Pancreas (tissue), 10 donors: ENCODE measurements at regions of chr6 and their contacts with region 1.

Region 1: DNA sequence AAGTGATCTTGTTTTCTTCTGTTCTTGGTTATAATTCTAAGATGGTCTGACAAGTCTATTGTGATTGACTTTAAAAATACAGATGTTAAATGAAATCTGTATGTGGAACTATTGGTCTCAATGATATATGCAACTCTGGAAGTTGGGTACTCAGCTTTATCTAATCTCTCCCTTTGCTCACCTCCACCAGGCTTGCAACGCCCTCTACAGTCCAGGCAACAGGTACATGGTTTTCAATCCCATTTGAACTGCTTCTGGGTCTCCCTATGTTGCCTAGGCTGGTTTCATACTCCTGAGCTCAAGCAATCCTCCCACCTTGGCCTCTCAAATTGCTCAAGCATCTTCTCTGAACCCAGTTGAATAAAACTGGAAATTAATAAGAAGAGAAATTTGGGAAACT is 25.6 kb upstream of the HLA-DQB1 start:
- DNase-seq: peak in 1 of 6 donors; percentile 17
- ATAC-seq: peak in 1 of 4 donors; percentile 82
- H3K4me3 ChIP-seq: no peak overlapping the region
- H3K27ac ChIP-seq: no peak overlapping the region
- H3K4me1 ChIP-seq: no peaks in the 10 kb centered on the region
- H3K27me3 ChIP-seq: no peaks in the 10 kb centered on the region
- CTCF ChIP-seq: no peak

Region 2: DNA sequence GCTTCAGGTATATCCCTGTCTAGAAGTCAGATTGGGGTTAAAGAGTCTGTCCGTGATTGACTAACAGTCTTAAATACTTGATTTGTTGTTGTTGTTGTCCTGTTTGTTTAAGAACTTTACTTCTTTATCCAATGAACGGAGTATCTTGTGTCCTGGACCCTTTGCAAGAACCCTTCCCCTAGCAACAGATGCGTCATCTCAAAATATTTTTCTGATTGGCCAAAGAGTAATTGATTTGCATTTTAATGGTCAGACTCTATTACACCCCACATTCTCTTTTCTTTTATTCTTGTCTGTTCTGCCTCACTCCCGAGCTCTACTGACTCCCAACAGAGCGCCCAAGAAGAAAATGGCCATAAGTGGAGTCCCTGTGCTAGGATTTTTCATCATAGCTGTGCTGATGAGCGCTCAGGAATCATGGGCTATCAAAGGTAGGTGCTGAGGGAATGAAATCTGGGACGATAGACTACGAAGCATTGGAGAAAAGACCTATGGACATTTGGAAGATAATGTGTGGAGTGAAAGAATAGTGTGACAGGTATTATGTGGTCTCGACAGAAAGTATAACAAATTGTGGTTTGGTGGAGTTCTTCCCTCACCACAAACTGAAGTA is 252.3 kb before region 1 on chr6 and contains the start of gene HLA-DRA:
- intact Hi-C with region 1: loop called in 2 of 3 experiments (anchors 5 to 10 kb)
- DNase-seq: peak in 1 of 6 donors; percentile 23
- ATAC-seq: peak in 3 of 4 donors; percentile 72 to 88 (median 81)
- H3K4me3 ChIP-seq: peak within 1 kb of the TSS in 3 of 4 donors; percentile 0 to 36 (median 9)
- H3K27ac ChIP-seq: peak within 1 kb of the TSS in 2 of 4 donors; percentile 55 to 62
- H3K4me1 ChIP-seq: no peaks in the 10 kb centered on the region
- H3K27me3 ChIP-seq: no peaks in the 10 kb centered on the region
- CTCF ChIP-seq: no peak
- total RNA-seq, gene HLA-DRA: 16.3 to 414 (median 42.2) TPM

Region 3: DNA sequence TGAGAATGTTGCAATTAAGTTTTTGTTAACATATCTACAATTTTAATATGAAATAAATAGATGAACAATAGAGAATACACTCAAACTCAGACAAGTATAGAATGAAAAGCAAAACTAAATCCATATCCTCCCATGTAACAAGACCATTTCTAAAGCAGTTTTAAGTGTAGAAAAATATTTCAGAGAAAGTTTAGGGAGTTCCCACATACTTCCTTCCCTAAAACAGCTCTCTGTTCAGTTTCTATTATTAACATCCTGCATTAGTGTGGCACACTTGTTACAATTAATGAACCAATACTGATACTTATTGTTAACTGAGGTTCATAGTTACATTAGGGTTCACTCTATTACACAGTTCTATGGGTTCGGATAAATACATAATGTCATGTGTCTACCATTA is 200.3 kb before region 1 on chr6:
- intact Hi-C with region 1: no loop called
- DNase-seq: no peak
- ATAC-seq: no peak
- H3K4me3 ChIP-seq: no peak overlapping the region
- H3K27ac ChIP-seq: no peak overlapping the region
- H3K4me1 ChIP-seq: no peaks in the 10 kb centered on the region
- H3K27me3 ChIP-seq: no peaks in the 10 kb centered on the region
- CTCF ChIP-seq: no peak